ENCODE measurements at regions of chr6 and their contacts with region 1.

Region 1: GRCh38 chr6:33768644-33769120 is 20.2 kb downstream of the LEMD2 start:
- DNase-seq: peak; percentile 64
- ATAC-seq: peak; percentile 89
- H3K4me3 ChIP-seq: no peak overlapping the region
- H3K27ac ChIP-seq: no peak overlapping the region
- H3K4me1 ChIP-seq: peaks cover 5% of the 10 kb centered on the region
- H3K27me3 ChIP-seq: peaks cover 2 to 17% of the 10 kb centered on the region in 2 experiments; a peak in 3 of 5 replicates
- CTCF ChIP-seq: peak; percentile 94
- EP300 ChIP-seq: no peak
- POLR2A ChIP-seq: no peak
- RAD21 ChIP-seq: peak; percentile 69

Region 2: DNA sequence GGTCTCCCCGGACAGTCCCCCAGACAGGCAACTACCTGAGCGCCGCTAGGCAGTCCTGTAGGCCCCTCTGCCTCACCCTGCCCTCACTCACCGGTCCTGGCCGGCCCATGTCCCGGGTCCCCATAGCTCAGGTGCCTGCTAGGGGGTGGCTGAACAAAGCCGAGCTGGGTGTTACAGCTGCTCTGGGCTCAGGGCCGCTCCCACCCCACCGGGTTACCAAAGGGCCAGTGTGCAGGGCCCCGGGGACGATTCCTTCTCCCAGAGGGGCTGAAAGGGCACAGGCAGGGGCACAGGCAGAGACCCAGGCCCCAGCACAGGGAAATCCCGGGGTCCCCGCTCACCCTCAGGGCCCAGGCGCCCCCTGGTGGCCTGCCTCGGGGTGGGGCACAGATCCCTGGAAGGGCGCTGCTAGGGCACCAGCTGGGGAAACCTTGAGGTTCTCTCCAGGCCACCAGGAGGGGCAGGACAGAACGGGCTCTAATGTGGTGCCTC is 258.8 kb after region 1 on chr6:
- CTCF ChIA-PET with region 1: interaction called, 11 read pairs
- POLR2A ChIA-PET with region 1: no interaction called
- in situ Hi-C with region 1: no loop called
- intact Hi-C with region 1: loop called (anchors 1 kb)
- DNase-seq: peak; percentile 30
- ATAC-seq: peak; percentile 83
- H3K4me3 ChIP-seq: no peak overlapping the region
- H3K27ac ChIP-seq: no peak overlapping the region
- H3K4me1 ChIP-seq: no peaks in the 10 kb centered on the region
- H3K27me3 ChIP-seq: peaks cover 18 to 72% of the 10 kb centered on the region in 2 experiments; a peak in 4 of 5 replicates
- CTCF ChIP-seq: peak; percentile 96
- EP300 ChIP-seq: no peak
- POLR2A ChIP-seq: no peak
- RAD21 ChIP-seq: peak; percentile 97

Measured in HepG2 (cell line).